Cardiac septum (tissue), 1 donor: ENCODE measurements at regions of chr18 and their contacts with region 1.

Region 1: DNA sequence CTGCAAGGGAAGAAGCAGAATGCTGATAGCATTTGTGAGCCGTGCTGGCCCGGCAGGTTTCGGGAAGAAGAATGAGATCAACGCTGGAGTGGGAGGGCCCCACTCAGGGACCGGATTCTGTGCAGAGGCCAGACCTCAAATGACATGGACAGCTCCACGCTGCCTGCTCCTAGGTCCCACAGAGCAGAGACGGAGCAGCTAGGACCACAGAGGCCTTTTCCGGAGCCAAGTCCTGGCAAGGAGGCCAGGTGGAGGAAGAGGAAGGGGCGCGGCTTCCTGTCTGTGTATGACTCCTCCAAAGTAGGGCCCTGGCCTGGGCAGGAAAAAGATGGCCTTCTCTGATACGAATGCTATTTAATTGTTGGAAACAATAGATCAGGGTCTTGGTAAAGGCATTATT is 139.9 kb downstream of the LRRC30 start:
- DNase-seq: peak; percentile 89

Region 2: GRCh38 chr18:7071600-7071999 is 299.2 kb before region 1 on chr18:
- intact Hi-C with region 1: no loop called
- DNase-seq: no peak

Region 3: GRCh38 chr18:7164323-7165004 is 206.3 kb before region 1 on chr18:
- intact Hi-C with region 1: no loop called
- DNase-seq: peak; percentile 26

Region 4: DNA sequence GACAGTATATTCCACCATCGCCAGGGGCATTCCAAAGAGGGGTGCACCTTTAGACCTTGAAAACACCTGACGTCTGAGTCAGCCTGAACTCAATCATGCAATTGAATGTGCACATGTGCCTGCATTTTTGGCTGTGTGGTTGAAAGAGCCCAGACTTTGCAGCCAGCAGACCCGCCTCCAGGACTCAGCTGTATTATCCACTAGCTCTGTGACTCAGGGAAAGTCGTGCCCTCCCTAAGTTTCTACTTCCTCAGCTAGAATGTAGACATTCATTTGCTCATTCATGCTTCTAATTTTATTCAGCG is 45.7 kb before region 1 on chr18:
- intact Hi-C with region 1: loop called (anchors 2 kb)
- DNase-seq: no peak

Region 5: GRCh38 chr18:7559709-7560319 is 189.0 kb after region 1 on chr18:
- intact Hi-C with region 1: loop called (anchors 2 kb)
- DNase-seq: no peak